Activated CD8-positive, alpha-beta T cell treated with anti-CD3 and anti-CD28 coated beads, Interleukin-2, amount 10 ng/mL, durations not matched to agents 7 days and 5 days (primary cell): ENCODE measurements at regions of chr22 and their contacts with region 1.

Region 1: DNA sequence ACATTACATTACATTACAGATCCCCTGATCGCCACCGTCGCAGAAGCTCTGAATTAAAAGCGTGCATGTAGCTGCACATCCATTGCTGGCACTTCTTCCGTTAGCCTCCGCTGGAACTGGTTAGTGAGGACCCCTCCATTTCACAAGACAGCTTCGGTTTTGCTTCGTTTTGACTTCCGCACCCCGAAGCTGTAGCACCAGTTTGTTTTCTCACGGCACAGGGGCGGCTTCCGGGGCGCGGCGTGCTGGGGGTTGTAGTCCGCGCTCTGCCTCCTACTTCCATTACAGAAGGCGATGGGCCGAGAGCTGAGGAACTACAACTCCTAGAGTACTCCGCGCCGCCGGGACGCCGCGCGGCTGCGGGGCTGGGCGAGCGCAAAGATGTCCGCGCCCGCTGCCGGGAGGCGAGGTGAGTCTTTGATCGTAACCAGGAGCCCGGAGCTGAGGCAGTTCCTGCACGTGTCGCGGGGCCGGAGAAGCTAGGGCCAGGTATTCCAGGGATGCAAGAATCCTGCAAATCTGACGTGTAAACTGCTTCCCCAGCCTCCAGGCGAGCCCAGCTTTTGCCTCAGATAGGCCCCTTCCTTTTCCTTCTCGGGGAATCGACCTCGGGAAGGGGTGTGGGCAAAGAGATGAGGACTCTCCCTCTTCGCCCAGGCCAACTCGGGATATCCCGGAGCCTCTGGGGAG is at the start of gene PEX26:
- DNase-seq: peak; percentile 98
- ATAC-seq: peak; percentile 99
- H3K4me3 Mint-ChIP-seq: peak within 1 kb of the TSS; percentile 96
- H3K27ac Mint-ChIP-seq: peak within 1 kb of the TSS; percentile 98
- H3K4me1 Mint-ChIP-seq: peaks cover 45% of the 10 kb centered on the region
- H3K27me3 Mint-ChIP-seq: no peaks in the 10 kb centered on the region
- total RNA-seq, gene PEX26: 44.4 TPM

Region 2: DNA sequence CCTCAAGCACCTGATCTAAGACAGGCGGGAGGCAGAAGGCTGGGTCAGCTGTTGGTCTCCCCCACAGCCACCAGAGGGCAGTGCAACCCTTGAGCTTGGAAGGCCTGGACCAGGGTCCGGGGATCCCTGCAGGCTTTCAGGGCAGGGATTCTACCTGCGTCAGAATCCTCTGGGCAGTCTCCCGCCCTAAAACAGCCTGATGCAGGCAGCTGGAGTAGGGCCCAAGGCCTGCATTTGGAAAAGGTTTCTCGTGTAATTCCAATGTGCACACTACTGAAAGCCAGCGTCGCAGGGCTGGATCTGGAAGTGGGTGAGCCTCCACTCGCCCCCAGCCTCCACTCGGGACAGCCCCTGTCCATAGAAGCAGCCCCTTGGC is 335.3 kb before region 1 on chr22:
- CTCF ChIA-PET with region 1: interaction called, 29 read pairs
- POLR2A ChIA-PET with region 1: no interaction called
- DNase-seq: peak; percentile 73
- ATAC-seq: peak; percentile 75
- H3K4me3 Mint-ChIP-seq: no peak overlapping the region
- H3K27ac Mint-ChIP-seq: no peak overlapping the region
- H3K4me1 Mint-ChIP-seq: no peaks in the 10 kb centered on the region
- H3K27me3 Mint-ChIP-seq: no peaks in the 10 kb centered on the region

Region 3: GRCh38 chr22:17830043-17830961 is 247.5 kb before region 1 on chr22:
- CTCF ChIA-PET with region 1: interaction called, 157 read pairs
- POLR2A ChIA-PET with region 1: interaction called, 16 read pairs
- DNase-seq: peak; percentile 86
- ATAC-seq: peak; percentile 86
- H3K4me3 Mint-ChIP-seq: no peak overlapping the region
- H3K27ac Mint-ChIP-seq: no peak overlapping the region
- H3K4me1 Mint-ChIP-seq: peaks cover 5% of the 10 kb centered on the region
- H3K27me3 Mint-ChIP-seq: no peaks in the 10 kb centered on the region

Region 4: GRCh38 chr22:17950651-17951214 is 127.1 kb before region 1 on chr22:
- CTCF ChIA-PET with region 1: no interaction called
- POLR2A ChIA-PET with region 1: no interaction called
- DNase-seq: no peak
- ATAC-seq: no peak
- H3K4me3 Mint-ChIP-seq: no peak overlapping the region
- H3K27ac Mint-ChIP-seq: no peak overlapping the region
- H3K4me1 Mint-ChIP-seq: no peaks in the 10 kb centered on the region
- H3K27me3 Mint-ChIP-seq: no peaks in the 10 kb centered on the region

Region 5: DNA sequence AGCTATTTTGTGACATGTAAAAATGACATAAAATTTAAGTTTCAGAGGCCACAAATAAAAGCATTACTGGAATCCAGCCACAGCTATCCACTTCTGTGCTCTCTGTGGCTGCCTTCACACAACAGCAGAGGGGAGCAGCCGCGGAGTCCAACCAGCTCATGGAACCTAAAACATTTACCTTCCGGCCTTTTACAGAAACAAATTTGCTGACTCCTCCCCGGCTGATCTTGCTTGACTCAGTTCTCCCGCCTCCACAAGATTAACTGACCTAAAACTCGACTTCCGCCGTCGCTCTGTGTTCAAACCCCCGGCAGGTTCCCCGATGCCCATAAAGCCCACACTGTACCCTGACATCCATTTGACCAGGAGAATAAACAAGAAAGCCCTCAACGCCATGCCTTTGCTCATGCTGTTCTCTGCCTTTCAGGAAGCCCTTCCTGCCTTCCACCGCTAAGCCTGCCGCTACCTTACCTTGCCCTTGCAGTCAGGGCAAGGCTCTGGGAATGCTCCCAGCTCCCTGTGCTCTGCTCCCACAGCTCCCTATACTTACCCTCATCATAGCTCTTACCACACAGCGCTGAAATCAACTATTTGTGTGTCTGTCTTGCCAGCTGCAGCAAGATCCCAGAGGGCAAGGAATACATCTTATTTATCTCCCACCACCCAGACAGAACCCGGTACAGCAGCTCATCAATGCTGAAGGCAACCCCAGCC is 88.8 kb before region 1 on chr22:
- CTCF ChIA-PET with region 1: no interaction called
- POLR2A ChIA-PET with region 1: no interaction called
- DNase-seq: no peak
- ATAC-seq: no peak
- H3K4me3 Mint-ChIP-seq: no peak overlapping the region
- H3K27ac Mint-ChIP-seq: no peak overlapping the region
- H3K4me1 Mint-ChIP-seq: peaks cover 17% of the 10 kb centered on the region
- H3K27me3 Mint-ChIP-seq: no peaks in the 10 kb centered on the region

Region 6: DNA sequence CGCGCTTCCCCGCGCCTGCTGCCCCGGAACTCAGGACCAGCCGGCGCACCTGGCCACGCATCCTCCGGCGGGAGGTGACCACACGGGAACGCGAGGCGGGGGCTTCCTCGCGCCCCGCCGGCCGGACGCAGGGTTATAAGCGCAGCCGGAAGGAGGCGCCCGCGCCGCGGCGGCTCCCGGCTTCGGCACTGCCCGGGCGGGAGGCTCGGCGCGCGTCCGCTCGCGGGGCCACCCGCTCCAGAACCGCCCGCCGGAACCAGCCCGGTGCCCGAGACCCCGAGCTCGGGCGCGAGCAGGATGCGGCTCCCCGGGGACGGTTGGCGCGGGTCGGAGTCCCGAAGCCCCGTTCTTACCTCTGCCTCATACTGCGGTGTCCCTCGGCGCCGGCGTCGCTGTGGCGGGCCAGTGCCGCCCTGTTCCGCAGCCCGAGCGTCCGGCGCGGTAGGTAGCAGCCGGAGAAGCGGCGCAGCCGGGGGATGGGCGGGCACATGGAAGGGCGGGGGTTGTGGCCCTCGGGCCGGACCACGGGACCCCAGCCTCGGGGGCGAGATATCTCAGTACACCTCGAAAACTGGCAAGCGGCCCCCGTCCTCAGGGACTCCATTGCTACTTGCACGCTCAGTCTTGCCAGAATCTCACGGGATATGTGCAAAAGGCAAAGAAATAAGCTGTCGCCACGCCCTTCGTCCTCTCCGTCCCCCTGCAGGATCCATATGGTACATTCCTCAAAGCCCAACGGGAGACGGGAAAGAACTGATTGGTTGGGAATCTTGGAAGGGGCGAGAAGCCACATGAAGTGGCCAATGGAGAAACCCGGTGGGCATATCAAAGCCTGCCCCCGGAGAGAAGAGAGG is 76.5 kb before region 1 on chr22:
- CTCF ChIA-PET with region 1: interaction called, 6 read pairs
- POLR2A ChIA-PET with region 1: interaction called, 14 read pairs
- DNase-seq: peak; percentile 85
- ATAC-seq: peak; percentile 87
- H3K4me3 Mint-ChIP-seq: peak overlapping the region; percentile 87
- H3K27ac Mint-ChIP-seq: peak overlapping the region; percentile 95
- H3K4me1 Mint-ChIP-seq: peaks cover 46% of the 10 kb centered on the region
- H3K27me3 Mint-ChIP-seq: peaks cover 15% of the 10 kb centered on the region

Region 7: GRCh38 chr22:18012531-18012930 is 65.3 kb before region 1 on chr22:
- CTCF ChIA-PET with region 1: no interaction called
- POLR2A ChIA-PET with region 1: no interaction called
- DNase-seq: no peak
- ATAC-seq: no peak
- H3K4me3 Mint-ChIP-seq: no peak overlapping the region
- H3K27ac Mint-ChIP-seq: no peak overlapping the region
- H3K4me1 Mint-ChIP-seq: no peaks in the 10 kb centered on the region
- H3K27me3 Mint-ChIP-seq: peaks cover 16% of the 10 kb centered on the region

Region 8: GRCh38 chr22:18024276-18024947 is 53.4 kb before region 1 on chr22 and contains the start of gene MICAL3:
- CTCF ChIA-PET with region 1: interaction called, 22 read pairs
- POLR2A ChIA-PET with region 1: no interaction called
- DNase-seq: peak; percentile 66
- ATAC-seq: peak; percentile 95
- H3K4me3 Mint-ChIP-seq: peak within 1 kb of the TSS; percentile 83
- H3K27ac Mint-ChIP-seq: no peak within 1 kb of the TSS
- H3K4me1 Mint-ChIP-seq: peaks cover 14% of the 10 kb centered on the region
- H3K27me3 Mint-ChIP-seq: peaks cover 46% of the 10 kb centered on the region
- total RNA-seq, gene MICAL3: 26.4 to 29.7 TPM

Region 9: GRCh38 chr22:18152519-18152918 is 74.7 kb after region 1 on chr22:
- CTCF ChIA-PET with region 1: interaction called, 10 read pairs
- POLR2A ChIA-PET with region 1: interaction called, 18 read pairs
- DNase-seq: peak; percentile 70
- ATAC-seq: peak; percentile 64
- H3K4me3 Mint-ChIP-seq: peak overlapping the region; percentile 92
- H3K27ac Mint-ChIP-seq: peak overlapping the region; percentile 74
- H3K4me1 Mint-ChIP-seq: peaks cover 69% of the 10 kb centered on the region
- H3K27me3 Mint-ChIP-seq: no peaks in the 10 kb centered on the region